Left ventricle myocardium superior (tissue), 1 donor: ENCODE measurements at regions of chr15 and their contacts with region 1.

Region 1: GRCh38 chr15:89299896-89300295 is 34.7 kb downstream of the POLG start:
- DNase-seq: no peak
- ATAC-seq: no peak

Region 2: DNA sequence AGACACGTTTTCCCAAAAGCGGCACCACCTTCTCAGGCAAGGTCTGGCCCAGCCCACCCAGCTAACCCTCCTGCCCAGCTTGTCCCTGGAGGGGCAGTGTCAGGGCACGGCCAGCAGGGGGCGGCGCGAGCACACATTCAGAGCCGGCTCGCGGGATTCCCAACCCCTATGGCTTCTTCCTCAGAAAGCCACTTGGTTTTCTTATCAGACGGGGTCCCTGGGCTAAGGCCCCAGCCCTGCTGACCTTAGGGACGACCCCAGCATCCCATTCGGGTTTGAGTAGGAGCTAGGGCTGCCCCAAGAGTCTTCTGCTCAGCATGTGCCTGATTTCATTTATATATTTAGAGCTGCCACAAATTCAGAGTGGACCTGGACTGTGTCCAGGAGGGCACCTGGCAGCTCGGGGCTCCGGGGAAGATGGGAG is 93.0 kb before region 1 on chr15:
- intact Hi-C with region 1: loop called (anchors 10 kb)
- DNase-seq: peak; percentile 85
- ATAC-seq: peak; percentile 89